ENCODE measurements at regions of chr4 and their contacts with region 1.

Region 1: DNA sequence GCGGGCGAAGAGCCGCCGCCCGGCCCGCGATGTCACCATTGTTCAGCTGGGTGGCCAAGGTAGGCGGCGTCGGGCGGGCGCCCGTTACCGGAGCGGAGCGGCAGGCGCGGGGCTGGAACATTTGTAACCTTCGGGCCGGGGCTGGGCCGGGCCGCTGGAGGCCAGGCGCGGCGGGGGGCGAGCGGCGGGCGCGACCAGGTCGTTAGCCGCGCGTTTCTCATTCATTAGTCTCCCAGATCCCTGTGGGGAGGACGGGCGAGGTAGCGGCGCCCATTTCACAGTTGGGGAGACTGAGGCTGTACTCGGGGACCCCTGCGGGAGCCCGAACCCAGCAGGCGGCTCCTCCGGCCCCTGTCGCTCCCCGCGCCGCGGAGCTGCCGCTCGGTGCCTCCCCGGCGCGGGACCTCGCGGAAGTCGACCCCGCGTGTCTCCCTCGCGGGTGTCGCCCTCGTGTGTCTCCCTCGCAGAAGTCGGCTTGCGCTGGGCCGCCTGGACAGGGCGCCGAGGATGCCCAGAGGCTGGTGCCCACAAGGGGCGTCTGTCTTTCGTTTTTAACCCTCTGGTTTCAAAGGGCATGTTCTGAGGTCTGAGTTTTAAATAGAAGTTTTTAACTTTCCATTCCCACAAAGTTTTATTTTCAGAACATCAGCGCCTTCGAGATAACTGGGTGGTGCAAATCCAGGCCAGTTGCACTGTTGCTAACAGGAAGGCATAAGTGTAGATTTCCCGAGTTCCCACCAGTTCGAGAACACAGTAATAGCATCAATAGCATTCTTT is 17.5 kb downstream of the PTTG2 start:
- DNase-seq: peak; percentile 89 to 94
- ATAC-seq: peak; percentile 92
- H3K4me3 ChIP-seq: peak overlapping the region; percentile 61 to 91
- H3K27ac ChIP-seq: peak overlapping the region; percentile 96 to 97
- H3K4me1 ChIP-seq: peaks cover 6 to 7% of the 10 kb centered on the region in 2 donors
- H3K27me3 ChIP-seq: no peaks in the 10 kb centered on the region

Region 2: GRCh38 chr4:37826295-37827029 is 151.2 kb before region 1 on chr4 and contains the start of gene PGM2:
- intact Hi-C with region 1: loop called (anchors 5 kb)
- DNase-seq: peak; percentile 93 to 96
- ATAC-seq: peak; percentile 98
- H3K4me3 ChIP-seq: peak within 1 kb of the TSS; percentile 33 to 79
- H3K27ac ChIP-seq: peak within 1 kb of the TSS in 1 of 2 donors; percentile 45
- H3K4me1 ChIP-seq: peaks cover 0 to 2% of the 10 kb centered on the region in 2 donors
- H3K27me3 ChIP-seq: no peaks in the 10 kb centered on the region
- total RNA-seq, gene PGM2: 23.7 to 24.6 TPM

Region 3: DNA sequence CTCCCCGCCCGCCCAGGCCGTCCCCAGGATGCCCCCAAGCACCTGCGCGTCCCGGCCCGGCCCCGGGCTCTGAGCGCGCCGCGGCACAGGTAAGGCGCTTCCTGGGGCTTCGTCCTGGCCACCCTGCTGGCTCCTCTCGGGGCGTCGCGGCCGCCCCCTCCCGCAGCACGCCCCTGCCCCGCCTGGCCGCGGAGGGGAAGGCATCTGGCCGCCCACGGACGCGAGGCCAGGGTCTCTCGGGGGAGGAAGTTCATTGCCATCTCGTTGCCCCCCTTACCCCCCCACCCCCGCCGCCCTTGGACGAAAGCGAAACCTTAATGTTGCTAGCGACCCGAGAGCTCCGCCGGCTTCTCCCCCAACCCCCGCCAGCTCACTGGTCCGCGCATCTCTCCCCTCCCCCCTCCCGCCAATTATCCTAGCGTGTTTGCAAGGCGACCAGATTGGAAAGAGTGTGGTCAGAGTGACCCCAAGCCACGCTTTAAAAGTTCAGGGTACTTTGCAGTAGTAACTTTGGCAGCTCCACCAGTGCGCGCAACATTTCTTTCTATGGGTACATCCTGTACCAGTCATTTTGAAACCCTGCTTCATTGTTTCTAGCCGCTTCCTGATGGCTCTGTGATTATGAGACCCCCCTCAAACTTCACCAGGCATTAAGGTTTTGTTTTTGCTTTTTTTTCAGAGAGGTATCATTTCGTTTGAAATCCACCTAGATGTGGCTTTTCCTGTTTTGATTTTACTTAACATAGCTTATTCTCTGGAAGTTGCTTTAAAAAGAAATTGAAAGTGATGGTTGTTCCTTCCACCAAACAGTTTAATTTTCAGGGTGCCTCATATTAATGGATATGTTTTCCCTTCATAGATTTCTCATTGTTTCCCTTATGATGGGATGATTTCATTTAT is 86.1 kb before region 1 on chr4:
- intact Hi-C with region 1: loop called in 1 of 2 experiments (anchors 5 kb)
- DNase-seq: peak in 1 of 2 donors; percentile 55
- ATAC-seq: peak; percentile 12
- H3K4me3 ChIP-seq: peak overlapping the region; percentile 77 to 93
- H3K27ac ChIP-seq: peak overlapping the region; percentile 77 to 91
- H3K4me1 ChIP-seq: peaks cover 5% of the 10 kb centered on the region in 2 donors
- H3K27me3 ChIP-seq: no peaks in the 10 kb centered on the region

Region 4: GRCh38 chr4:37946503-37947179 is 31.0 kb before region 1 on chr4:
- intact Hi-C with region 1: no loop called
- DNase-seq: peak in 1 of 2 donors; percentile 81
- ATAC-seq: peak; percentile 52
- H3K4me3 ChIP-seq: no peak overlapping the region
- H3K27ac ChIP-seq: no peak overlapping the region
- H3K4me1 ChIP-seq: no peaks in the 10 kb centered on the region
- H3K27me3 ChIP-seq: no peaks in the 10 kb centered on the region

Region 5: GRCh38 chr4:38013461-38014366 is 36.1 kb after region 1 on chr4:
- intact Hi-C with region 1: loop called in 1 of 2 experiments (anchors 5 kb)
- DNase-seq: peak; percentile 82 to 87
- ATAC-seq: peak; percentile 44
- H3K4me3 ChIP-seq: no peak overlapping the region
- H3K27ac ChIP-seq: no peak overlapping the region
- H3K4me1 ChIP-seq: peaks cover 5% of the 10 kb centered on the region in 2 donors
- H3K27me3 ChIP-seq: no peaks in the 10 kb centered on the region

Region 6: DNA sequence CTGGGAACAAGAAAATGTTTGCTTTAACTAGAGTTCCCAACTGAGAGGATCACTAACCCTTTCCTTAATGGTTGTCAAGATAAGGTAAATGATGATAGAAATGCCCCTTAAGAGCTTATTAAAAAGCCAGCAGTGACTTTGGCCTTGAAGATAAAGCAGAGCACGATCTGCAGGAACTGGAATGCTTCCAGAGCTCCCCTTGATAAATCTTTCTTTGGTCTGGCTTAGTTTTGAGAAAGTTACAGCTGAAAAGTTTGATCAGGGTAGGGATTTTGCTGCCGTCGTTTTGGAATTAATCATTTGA is 46.5 kb after region 1 on chr4:
- intact Hi-C with region 1: no loop called
- DNase-seq: no peak
- ATAC-seq: no peak
- H3K4me3 ChIP-seq: no peak overlapping the region
- H3K27ac ChIP-seq: no peak overlapping the region
- H3K4me1 ChIP-seq: no peaks in the 10 kb centered on the region
- H3K27me3 ChIP-seq: no peaks in the 10 kb centered on the region

Measured in aorta (tissue), 5 donors.